Sigmoid colon (tissue), 7 donors: ENCODE measurements at regions of chr15 and their contacts with region 1.

Region 1: GRCh38 chr15:90362936-90363212 is 10.8 kb downstream of the ZNF774 start:
- DNase-seq: peak; percentile 79
- H3K4me3 ChIP-seq: no peak overlapping the region
- H3K27ac ChIP-seq: peak overlapping the region; percentile 80 to 85 (median 83)
- H3K4me1 ChIP-seq: peaks cover 0 to 58% (median 37%) of the 10 kb centered on the region in 4 donors
- H3K27me3 ChIP-seq: no peaks in the 10 kb centered on the region
- CTCF ChIP-seq: no peak
- EP300 ChIP-seq: peak in 2 of 4 donors; percentile 5 to 19
- POLR2A ChIP-seq: no peak

Region 2: GRCh38 chr15:90291679-90292356 is 71.1 kb before region 1 on chr15:
- intact Hi-C with region 1: no loop called
- DNase-seq: no peak
- H3K4me3 ChIP-seq: no peak overlapping the region
- H3K27ac ChIP-seq: no peak overlapping the region
- H3K4me1 ChIP-seq: peaks cover 0 to 13% (median 9%) of the 10 kb centered on the region in 4 donors
- H3K27me3 ChIP-seq: no peaks in the 10 kb centered on the region
- CTCF ChIP-seq: no peak
- EP300 ChIP-seq: no peak
- POLR2A ChIP-seq: no peak

Region 3: DNA sequence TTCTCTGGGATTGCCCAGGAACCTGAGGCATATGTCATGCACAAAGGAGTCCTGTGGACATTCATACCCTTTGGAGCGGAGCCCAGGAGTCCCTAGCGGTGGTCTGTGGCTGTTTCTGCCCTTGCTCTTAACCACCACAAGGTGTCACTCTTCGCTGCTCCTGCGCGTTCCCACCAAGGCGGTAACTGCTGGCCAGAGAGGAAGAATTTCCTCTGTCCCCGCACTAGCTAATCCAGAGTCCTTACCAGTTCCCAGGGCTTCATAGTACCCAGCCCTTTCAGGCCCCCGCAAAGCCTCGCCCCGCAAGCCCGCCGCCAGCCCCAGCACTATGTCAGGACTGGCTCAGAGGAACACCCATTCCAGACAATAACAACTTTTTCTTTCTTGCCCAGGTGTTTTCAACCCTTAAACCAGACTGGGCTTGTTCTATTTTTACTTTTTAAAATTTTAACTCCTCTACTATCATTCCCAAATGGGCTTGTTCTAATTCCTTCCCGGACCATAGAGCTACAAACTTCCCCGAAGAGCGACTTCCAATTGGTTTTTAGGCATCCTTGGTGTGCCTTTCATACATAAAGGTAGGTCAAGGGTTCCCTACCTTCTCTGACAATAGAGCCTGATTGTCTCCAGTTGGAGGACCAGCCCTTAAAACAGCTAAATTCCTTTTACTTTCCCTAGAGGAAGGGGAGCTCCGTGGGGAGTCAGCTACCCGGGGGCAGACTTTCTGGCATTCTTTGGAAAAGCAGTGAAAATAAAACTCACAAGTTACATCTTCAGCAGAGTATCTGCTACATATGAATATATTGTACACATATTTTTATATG is 42.6 kb before region 1 on chr15:
- intact Hi-C with region 1: loop called (anchors 5 kb)
- DNase-seq: peak; percentile 93
- H3K4me3 ChIP-seq: peak overlapping the region in 1 of 4 donors; percentile 11
- H3K27ac ChIP-seq: peak overlapping the region; percentile 28 to 50 (median 36)
- H3K4me1 ChIP-seq: peaks cover 0 to 42% (median 32%) of the 10 kb centered on the region in 4 donors
- H3K27me3 ChIP-seq: no peaks in the 10 kb centered on the region
- CTCF ChIP-seq: peak; percentile 95 to 100 (median 99)
- EP300 ChIP-seq: no peak
- POLR2A ChIP-seq: no peak

Region 4: DNA sequence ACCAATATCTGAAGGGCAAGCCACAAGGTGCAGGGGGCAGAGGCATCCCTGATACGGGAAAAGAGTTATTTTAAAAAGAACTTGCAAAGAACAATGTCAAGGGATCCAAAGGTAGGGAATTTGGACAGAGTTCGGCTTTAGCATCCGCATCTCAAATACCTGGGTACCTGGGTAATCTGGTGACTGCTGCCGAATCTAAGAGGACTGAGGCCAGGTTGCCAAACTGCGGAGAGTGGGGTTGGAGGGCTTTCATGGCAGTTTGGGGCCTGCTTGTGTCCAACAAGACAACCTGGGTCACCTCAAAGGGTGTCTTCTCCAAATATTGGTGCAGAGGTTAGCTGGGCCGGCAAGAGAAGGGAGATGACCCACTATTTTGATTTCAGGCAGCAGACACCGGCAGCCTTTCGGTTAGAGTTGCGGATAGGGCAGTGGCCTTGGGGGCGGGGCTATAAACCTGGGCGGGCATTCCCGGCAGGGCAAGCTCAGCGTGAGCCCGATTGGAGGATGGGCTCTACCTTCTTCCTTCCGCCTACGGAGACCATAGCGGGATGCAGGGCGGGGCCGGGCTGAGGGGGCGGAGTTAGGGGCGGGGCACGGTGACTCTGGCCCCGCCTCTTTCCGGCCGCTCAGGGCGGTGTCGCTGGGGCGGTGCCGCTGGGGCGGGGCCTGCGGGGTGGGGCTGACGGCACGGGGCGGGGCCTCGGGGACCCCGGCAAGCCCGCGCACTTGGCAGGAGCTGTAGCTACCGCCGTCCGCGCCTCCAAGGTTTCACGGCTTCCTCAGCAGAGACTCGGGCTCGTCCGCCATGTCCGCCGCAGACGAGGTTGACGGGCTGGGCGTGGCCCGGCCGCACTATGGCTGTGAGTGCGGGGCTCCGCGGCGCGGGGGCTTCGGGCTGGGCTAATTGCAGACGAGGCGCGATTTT is 24.9 kb after region 1 on chr15 and contains the start of gene IQGAP1:
- intact Hi-C with region 1: loop called (anchors 2 kb)
- DNase-seq: peak; percentile 99
- H3K4me3 ChIP-seq: peak within 1 kb of the TSS; percentile 86 to 99 (median 90)
- H3K27ac ChIP-seq: peak within 1 kb of the TSS; percentile 96 to 100 (median 96)
- H3K4me1 ChIP-seq: peaks cover 0 to 44% (median 38%) of the 10 kb centered on the region in 4 donors
- H3K27me3 ChIP-seq: no peaks in the 10 kb centered on the region
- CTCF ChIP-seq: no peak
- EP300 ChIP-seq: no peak
- POLR2A ChIP-seq: peak; percentile 78 to 79
- total RNA-seq, gene IQGAP1: 135 to 283 (median 183) TPM

Region 5: DNA sequence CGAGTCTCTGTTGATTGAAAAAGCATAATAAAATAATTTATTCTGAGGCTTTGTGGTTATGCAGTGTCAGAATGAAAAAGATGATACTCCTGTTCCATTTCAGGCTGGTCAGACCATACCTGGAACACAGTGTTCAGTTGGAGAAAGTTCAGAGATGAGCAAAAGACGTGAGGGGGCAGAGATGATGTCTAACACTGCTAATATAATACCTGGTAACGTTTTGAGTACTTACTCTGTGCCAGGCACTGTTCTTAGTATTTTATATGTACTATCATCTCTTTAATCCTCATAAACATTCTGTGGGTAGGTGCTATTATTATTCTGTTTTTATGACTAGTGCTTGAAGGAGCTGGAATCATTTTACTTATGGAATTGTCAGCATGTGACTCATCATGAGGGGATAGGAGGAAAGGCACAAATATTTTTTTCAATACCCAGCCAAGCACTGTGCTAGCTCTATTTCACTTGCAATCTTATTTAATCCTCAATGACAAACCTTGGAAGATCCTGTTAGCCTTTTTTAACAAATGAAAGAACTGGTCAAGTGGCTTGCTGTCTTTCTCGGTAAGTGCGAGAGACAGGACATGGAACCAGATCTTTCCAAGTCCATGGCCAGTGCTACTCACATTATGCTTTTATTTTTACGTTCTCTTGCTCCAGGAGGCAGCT is 57.0 kb after region 1 on chr15:
- intact Hi-C with region 1: loop called (anchors 2 kb)
- DNase-seq: no peak
- H3K4me3 ChIP-seq: peak overlapping the region in 1 of 4 donors; percentile 14
- H3K27ac ChIP-seq: peak overlapping the region; percentile 77 to 89 (median 82)
- H3K4me1 ChIP-seq: peaks cover 0 to 78% (median 63%) of the 10 kb centered on the region in 4 donors
- H3K27me3 ChIP-seq: no peaks in the 10 kb centered on the region
- CTCF ChIP-seq: no peak
- EP300 ChIP-seq: peak; percentile 88 to 98 (median 90)
- POLR2A ChIP-seq: no peak

Region 6: DNA sequence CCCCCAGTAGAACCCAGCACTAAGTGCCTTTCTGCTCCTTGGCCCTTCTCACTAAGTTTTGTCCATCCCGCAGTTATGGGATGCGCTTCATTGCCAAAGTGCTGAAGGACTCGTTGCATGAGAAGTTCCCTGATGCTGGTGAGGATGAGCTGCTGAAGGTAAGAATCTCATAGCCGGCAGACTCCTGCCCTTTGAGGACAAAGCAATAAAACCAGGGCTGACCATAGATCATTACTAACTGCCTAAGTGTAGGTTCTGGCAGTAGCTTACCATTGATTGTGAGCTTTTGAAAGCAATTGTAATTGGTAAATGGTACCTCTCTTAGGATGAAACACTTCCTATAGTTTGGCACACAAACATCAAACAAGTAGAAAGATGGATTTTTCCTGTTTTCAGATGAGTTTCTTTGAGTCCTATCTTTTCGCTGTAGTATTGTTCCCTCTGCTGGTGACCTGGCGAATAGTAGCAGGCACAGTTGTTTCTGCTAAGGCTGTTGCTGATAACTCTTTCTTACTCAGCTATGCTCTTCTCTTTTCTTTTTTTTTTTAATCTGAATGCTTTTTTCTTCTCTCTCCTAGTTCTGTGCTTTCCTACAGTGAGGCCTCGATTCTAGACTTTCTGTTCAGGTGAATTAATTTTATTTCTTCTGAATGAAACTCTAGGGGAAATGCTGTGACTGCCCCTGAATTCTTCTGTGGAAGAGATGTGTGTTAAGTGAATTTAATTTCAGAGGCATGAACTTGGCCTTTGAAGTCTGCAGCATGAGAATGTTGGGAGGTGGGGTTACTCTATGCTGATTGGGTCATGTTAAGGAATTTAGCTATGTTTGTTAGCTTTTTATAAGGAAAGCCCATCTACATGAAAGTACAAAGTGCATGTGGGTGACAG is 119.5 kb after region 1 on chr15:
- intact Hi-C with region 1: loop called (anchors 1 kb)
- DNase-seq: no peak
- H3K4me3 ChIP-seq: no peak overlapping the region
- H3K27ac ChIP-seq: peak overlapping the region in 3 of 4 donors; percentile 24 to 49 (median 29)
- H3K4me1 ChIP-seq: peaks cover 0 to 11% (median 5%) of the 10 kb centered on the region in 4 donors
- H3K27me3 ChIP-seq: no peaks in the 10 kb centered on the region
- CTCF ChIP-seq: peak; percentile 54 to 91 (median 79)
- EP300 ChIP-seq: no peak
- POLR2A ChIP-seq: no peak